ENCODE measurements at regions of chr14 and their contacts with region 1.

Region 1: GRCh38 chr14:45267071-45267470 is 14.1 kb upstream of the MIS18BP1 start:
- H3K4me3 Mint-ChIP-seq: no peak overlapping the region
- H3K27ac Mint-ChIP-seq: no peak overlapping the region
- H3K4me1 Mint-ChIP-seq: no peaks in the 10 kb centered on the region
- H3K27me3 Mint-ChIP-seq: no peaks in the 10 kb centered on the region

Region 2: GRCh38 chr14:44912041-44912869 is 354.8 kb before region 1 on chr14:
- intact Hi-C with region 1: loop called (anchors 2 kb)
- H3K4me3 Mint-ChIP-seq: peak overlapping the region; percentile 41
- H3K27ac Mint-ChIP-seq: no peak overlapping the region
- H3K4me1 Mint-ChIP-seq: no peaks in the 10 kb centered on the region
- H3K27me3 Mint-ChIP-seq: peaks cover 48% of the 10 kb centered on the region

Region 3: DNA sequence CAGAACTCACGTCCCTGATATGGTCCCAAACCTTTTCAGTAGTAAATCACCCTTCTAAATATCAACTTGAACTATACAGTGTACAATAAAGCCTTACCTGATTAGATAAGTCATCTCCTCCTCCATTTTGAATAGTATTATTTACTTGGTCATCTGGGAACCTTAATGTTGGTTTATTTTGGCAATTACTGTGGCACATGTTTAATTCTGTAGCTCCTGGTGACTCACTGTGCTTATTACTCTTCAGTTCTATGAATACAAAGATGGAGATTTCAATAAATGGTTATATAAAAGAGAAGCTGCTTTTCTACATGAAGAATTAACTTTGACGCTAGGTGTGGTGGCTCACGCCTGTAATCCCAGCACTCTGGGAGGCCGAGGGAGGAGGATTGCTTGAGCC is 39.5 kb before region 1 on chr14:
- intact Hi-C with region 1: loop called (anchors 5 kb)
- H3K4me3 Mint-ChIP-seq: no peak overlapping the region
- H3K27ac Mint-ChIP-seq: no peak overlapping the region
- H3K4me1 Mint-ChIP-seq: peaks cover 16% of the 10 kb centered on the region
- H3K27me3 Mint-ChIP-seq: no peaks in the 10 kb centered on the region